A549 (cell line): ENCODE measurements at regions of chr17 and their contacts with region 1.

Region 1: DNA sequence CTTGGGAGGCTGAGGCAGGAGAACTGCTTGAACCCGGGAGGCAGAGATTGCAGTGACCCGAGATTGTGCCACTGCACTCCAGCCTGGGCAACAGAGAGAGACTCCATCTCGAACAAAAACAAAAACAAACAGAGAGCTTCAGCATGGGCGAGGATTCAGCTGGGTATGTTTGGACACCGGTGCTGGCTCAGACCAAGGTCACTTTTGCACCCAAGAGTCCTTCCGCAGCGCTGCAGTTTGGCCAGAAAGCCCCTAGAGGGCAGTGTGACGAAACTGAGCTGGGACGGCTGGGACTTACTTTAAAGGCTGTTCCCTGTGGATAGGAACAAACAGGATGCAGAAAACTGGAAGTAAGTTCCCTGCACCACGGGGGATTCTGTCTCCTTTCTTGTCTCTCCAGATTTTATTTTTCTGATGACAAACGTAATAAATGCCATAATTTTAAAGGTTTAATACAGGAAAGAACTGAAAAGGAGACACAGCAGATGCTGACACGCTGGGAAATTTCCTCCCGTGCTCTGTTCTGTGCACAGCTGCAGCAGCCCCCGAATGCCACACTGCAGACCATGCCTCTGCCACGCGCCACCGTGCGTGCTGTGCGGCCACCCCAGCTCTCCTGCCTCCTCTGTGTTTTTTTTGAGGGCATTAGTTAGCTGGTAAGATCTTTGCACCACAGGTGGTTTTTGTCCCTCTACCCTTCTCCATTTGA is 25.2 kb upstream of the USP36 start:
- DNase-seq: peak; percentile 77 to 83
- ATAC-seq: peak; percentile 72 to 79
- H3K4me3 ChIP-seq: no peak overlapping the region
- H3K27ac ChIP-seq: peak overlapping the region; percentile 24 to 71; a peak in 3 of 6 replicates
- H3K4me1 ChIP-seq: peaks cover 46% of the 10 kb centered on the region
- CTCF ChIP-seq: peak; percentile 95
- EP300 ChIP-seq: no peak
- POLR2A ChIP-seq: no peak
- RAD21 ChIP-seq: peak; percentile 88 to 93

Region 2: DNA sequence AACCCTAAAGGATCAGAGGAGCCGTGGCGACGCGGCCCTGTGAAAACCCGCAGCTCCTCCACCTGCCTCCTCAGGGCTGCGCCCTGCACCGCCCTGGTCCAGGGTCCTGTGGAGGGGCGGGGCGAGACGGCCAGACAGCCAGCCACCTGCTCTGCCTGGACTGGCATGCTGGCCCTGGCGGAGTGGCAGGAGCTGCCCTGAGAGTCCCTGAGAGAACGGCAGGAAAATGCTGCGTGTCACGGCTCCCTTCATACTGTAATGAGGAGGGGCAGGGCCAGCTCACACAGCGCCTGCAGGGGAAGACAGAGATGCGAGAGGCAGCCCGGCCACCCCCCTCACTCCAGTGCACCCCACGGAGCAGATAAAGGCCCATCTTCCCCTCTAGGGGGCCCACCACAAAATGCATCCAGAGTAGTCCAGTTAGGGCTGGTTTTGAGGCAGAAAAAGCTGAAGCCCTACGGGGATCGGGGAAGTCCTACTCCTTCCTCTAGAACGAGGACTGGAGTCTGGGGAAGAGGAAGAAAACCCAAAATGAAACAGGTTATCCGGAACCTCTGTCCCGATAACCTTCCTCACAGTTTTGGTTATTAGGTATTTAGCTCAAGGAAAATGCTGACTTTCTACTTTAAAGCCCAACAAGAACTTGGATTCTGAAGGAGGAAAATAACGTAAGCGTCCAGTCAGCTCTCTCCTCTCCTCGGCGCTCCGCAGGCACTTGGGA is 191.1 kb before region 1 on chr17:
- CTCF ChIA-PET with region 1: no interaction called
- POLR2A ChIA-PET with region 1: no interaction called
- DNase-seq: no peak
- ATAC-seq: peak in 1 of 2 experiments; percentile 44; a peak in 3 of 6 replicates
- H3K4me3 ChIP-seq: no peak overlapping the region
- H3K27ac ChIP-seq: peak overlapping the region in 1 of 2 experiments; percentile 65; a peak in 3 of 6 replicates
- H3K4me1 ChIP-seq: peaks cover 48% of the 10 kb centered on the region
- CTCF ChIP-seq: no peak
- EP300 ChIP-seq: no peak
- POLR2A ChIP-seq: no peak
- RAD21 ChIP-seq: no peak

Region 3: DNA sequence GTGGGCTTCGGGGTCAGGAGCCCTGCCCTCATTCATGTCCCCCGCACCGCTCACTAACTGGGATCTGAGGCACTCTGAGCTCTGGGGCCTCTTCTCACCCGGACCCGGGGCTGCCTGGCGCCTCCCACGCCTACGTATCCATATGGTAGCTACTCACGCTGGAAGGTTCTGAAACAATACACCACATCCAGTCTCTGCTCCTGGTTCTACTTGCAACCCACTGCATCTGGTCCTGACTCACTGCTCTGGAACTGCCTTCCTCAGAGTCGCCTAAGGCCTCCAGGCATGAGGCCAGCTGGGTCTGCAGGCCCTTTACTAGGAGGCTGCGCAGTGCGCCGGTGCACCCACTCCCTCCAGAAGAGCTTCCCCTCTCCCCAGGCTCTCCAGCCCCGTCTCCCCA is 43.3 kb before region 1 on chr17:
- CTCF ChIA-PET with region 1: no interaction called
- POLR2A ChIA-PET with region 1: no interaction called
- DNase-seq: no peak
- ATAC-seq: peak in 1 of 2 experiments; percentile 9; a peak in 2 of 6 replicates
- H3K4me3 ChIP-seq: no peak overlapping the region
- H3K27ac ChIP-seq: no peak overlapping the region
- H3K4me1 ChIP-seq: no peaks in the 10 kb centered on the region
- CTCF ChIP-seq: no peak
- EP300 ChIP-seq: no peak
- POLR2A ChIP-seq: no peak
- RAD21 ChIP-seq: no peak

Region 4: GRCh38 chr17:78883164-78884122 is 17.6 kb after region 1 on chr17:
- CTCF ChIA-PET with region 1: interaction called, 61 read pairs
- POLR2A ChIA-PET with region 1: interaction called, 3 read pairs
- DNase-seq: peak; percentile 94 to 98
- ATAC-seq: peak; percentile 74 to 85
- H3K4me3 ChIP-seq: peak overlapping the region; percentile 14
- H3K27ac ChIP-seq: peak overlapping the region; percentile 86 to 91
- H3K4me1 ChIP-seq: peaks cover 47% of the 10 kb centered on the region
- CTCF ChIP-seq: 0 out of 3 replicates have a peak, but pooled peaks have one; percentile 5
- EP300 ChIP-seq: peak in 1 of 2 experiments; percentile 43; a peak in 1 of 5 replicates
- POLR2A ChIP-seq: no peak; the same call in 1 of the 2 replicates
- RAD21 ChIP-seq: peak; percentile 3 to 36; a peak in 2 of 5 replicates

Region 5: GRCh38 chr17:78896091-78896833 is 30.4 kb after region 1 on chr17:
- CTCF ChIA-PET with region 1: interaction called, 36 read pairs
- POLR2A ChIA-PET with region 1: no interaction called
- DNase-seq: no peak
- ATAC-seq: peak; percentile 24 to 27; a peak in 2 of 6 replicates
- H3K4me3 ChIP-seq: no peak overlapping the region
- H3K27ac ChIP-seq: no peak overlapping the region
- H3K4me1 ChIP-seq: 0 out of 3 replicates have a peak, but pooled peaks cover 3% of the 10 kb centered on the region
- CTCF ChIP-seq: no peak
- EP300 ChIP-seq: no peak
- POLR2A ChIP-seq: no peak
- RAD21 ChIP-seq: no peak

Region 6: GRCh38 chr17:78915872-78916632 is 50.2 kb after region 1 on chr17:
- CTCF ChIA-PET with region 1: interaction called, 21 read pairs
- POLR2A ChIA-PET with region 1: no interaction called
- DNase-seq: peak; percentile 50 to 74
- ATAC-seq: peak; percentile 66 to 72
- H3K4me3 ChIP-seq: 0 out of 3 replicates have a peak overlapping the region, but pooled peaks have one; percentile 16
- H3K27ac ChIP-seq: peak overlapping the region; percentile 73 to 77
- H3K4me1 ChIP-seq: peaks cover 49% of the 10 kb centered on the region
- CTCF ChIP-seq: no peak
- EP300 ChIP-seq: no peak
- POLR2A ChIP-seq: no peak
- RAD21 ChIP-seq: no peak

Region 7: GRCh38 chr17:78933959-78934568 is 68.2 kb after region 1 on chr17:
- CTCF ChIA-PET with region 1: interaction called, 41 read pairs
- POLR2A ChIA-PET with region 1: interaction called, 8 read pairs
- DNase-seq: peak; percentile 92 to 94
- ATAC-seq: peak; percentile 71 to 78
- H3K4me3 ChIP-seq: peak overlapping the region; percentile 26
- H3K27ac ChIP-seq: peak overlapping the region; percentile 91 to 97
- H3K4me1 ChIP-seq: peaks cover 56% of the 10 kb centered on the region
- CTCF ChIP-seq: no peak
- EP300 ChIP-seq: peak in 1 of 2 experiments; percentile 45; a peak in 1 of 5 replicates
- POLR2A ChIP-seq: peak; percentile 46
- RAD21 ChIP-seq: no peak

Region 8: DNA sequence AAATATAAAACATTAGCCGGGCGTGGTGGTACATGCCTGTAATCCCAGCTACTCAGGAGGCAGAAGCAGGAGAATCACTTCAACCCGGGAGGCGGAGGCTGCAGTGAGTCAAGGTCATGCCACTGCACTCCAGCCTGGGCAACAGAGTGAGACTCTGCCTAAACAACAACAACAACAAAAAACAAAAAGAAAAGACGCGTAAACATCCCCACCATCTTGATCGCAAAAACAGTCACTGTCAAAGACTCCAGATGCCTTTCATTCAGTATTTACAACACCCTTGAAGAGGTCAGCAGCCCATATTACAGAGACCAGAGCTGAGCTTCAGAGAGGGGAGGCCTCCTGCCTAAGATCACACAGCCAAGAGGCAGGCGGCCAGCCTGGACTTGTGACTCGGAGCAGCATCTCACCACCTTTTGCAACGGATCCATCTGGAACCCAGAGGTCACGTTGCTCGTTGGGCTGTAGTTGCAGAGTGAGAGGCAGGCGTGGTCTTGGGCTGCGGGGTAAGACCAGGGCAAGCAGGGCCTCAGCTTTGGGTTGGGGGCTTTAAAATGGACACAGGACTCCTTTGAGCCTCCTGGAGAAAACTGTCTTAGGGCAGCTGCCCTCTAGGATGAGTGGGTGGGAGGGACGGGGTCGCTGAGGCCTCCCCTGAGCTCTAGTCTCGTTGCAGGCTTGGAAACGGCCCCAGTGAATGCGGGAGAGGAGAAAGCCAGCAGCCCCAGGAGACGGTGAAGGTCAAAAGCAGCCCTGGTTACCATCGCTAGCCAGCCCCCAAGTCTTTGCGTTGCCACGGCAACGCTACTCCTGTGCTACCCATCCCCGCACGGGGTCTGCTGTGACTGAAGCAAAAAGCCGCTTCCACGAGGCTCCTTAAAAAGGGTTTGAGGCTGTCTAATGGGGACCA is 87.8 kb after region 1 on chr17:
- CTCF ChIA-PET with region 1: interaction called, 19 read pairs
- POLR2A ChIA-PET with region 1: no interaction called
- DNase-seq: no peak
- ATAC-seq: no peak
- H3K4me3 ChIP-seq: no peak overlapping the region
- H3K27ac ChIP-seq: peak overlapping the region in 1 of 2 experiments; percentile 4; a peak in 1 of 6 replicates
- H3K4me1 ChIP-seq: peaks cover 20% of the 10 kb centered on the region
- CTCF ChIP-seq: no peak
- EP300 ChIP-seq: no peak
- POLR2A ChIP-seq: no peak
- RAD21 ChIP-seq: no peak

Region 9: GRCh38 chr17:78979780-78980623 is 114.2 kb after region 1 on chr17 and contains the start of gene LGALS3BP:
- CTCF ChIA-PET with region 1: interaction called, 13 read pairs
- POLR2A ChIA-PET with region 1: no interaction called
- DNase-seq: peak; percentile 45 to 85
- ATAC-seq: peak; percentile 44 to 73
- H3K4me3 ChIP-seq: peak within 1 kb of the TSS; percentile 25
- H3K27ac ChIP-seq: peak within 1 kb of the TSS; percentile 59 to 82
- H3K4me1 ChIP-seq: peaks cover 15% of the 10 kb centered on the region; the same call in 2 of the 3 replicates
- CTCF ChIP-seq: no peak
- EP300 ChIP-seq: no peak
- POLR2A ChIP-seq: no peak
- RAD21 ChIP-seq: no peak
- polyA plus RNA-seq, gene LGALS3BP: 28.3 and 32.3 TPM in 2 replicates